Ascending aorta (tissue), 2 donors: ENCODE measurements at regions of chr14 and their contacts with region 1.

Region 1: GRCh38 chr14:35046048-35046741 is at the start of gene FAM177A1:
- DNase-seq: peak; percentile 97 to 100
- H3K4me3 ChIP-seq: peak within 1 kb of the TSS; percentile 81 to 89
- H3K27ac ChIP-seq: peak within 1 kb of the TSS; percentile 99
- H3K4me1 ChIP-seq: peaks cover 0 to 14% of the 10 kb centered on the region in 2 donors
- H3K27me3 ChIP-seq: no peaks in the 10 kb centered on the region
- CTCF ChIP-seq: no peak
- total RNA-seq, gene FAM177A1: 35.1 TPM

Region 2: DNA sequence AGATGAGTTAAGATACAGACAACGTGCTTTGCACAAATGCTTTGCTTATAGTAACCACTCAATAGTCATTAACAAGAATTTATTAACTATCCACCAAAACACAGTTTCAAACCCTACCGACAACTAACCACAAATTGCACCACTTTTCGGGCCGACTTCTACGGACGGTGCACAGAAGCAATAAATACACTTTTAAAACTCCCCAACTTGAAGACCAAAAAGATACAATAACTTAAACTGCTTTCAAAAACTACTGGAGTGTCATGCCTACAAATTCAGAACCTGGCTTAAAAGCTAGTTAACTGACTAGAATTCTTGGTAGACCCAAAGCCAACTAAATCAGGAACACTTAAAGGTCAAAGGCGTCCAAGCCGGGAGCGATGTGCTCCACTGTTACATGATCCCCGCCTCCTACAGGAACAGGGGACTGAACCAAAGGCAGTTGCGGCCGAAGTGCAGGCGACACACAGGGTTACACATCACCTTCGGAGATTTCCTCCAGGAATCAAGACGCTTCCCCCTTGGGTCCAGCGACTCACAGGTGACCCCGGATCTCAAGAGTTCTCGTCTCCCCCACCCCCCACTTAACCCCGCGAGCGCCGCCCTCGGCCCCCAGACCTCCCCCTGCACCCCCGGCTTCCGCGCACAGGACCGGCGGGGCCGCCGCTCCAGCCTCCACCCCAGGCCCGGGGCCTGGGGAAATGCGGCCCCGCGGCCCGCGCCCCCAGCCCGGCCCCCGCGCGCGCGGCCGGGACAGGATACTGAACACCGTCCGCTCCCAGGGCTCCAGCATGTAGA is 584.7 kb before region 1 on chr14:
- intact Hi-C with region 1: loop called (anchors 5 kb)
- DNase-seq: peak in 1 of 2 donors; percentile 77
- H3K4me3 ChIP-seq: peak overlapping the region; percentile 80 to 86
- H3K27ac ChIP-seq: peak overlapping the region; percentile 76 to 94
- H3K4me1 ChIP-seq: peaks cover 0 to 7% of the 10 kb centered on the region in 2 donors
- H3K27me3 ChIP-seq: no peaks in the 10 kb centered on the region
- CTCF ChIP-seq: no peak

Region 3: DNA sequence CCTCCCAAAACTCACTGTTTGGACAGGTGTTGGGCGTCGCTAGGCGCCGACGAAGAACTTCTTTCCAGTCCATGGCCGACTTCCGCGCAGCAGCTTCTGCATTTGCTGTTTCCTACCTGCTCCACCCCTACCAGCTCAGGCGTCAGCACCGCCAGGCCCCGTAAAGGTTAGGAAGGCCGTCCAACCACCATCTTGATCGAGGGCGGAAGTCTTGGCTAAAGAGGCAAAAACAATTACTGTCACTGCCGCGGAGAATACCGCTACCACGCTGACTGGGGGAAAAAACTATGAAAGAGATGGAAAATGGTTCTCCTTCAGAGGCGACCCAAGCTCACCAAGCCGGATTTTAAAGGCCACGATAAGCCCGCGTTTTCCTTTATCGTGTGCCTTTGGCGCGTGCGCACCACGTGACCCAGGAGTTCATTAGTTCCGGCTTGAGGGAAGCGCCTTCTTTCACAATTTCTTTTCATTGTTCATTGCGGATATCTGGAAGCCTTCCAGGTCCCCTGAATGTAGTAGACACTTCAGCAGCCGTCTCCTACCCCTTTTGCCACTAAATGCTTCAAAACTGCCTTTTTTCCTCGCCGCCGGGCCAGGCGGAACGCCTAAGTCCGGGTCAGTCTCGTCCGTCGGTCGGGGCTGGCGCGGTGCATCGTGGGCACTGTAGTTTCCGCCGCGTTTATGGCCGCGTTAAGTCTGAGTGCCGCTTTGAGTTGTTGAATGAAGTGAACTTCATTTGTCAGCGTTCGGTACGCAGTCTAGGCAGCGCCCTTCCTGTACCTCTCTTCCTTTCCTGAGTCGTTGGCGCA is 75.9 kb after region 1 on chr14 and contains the starts of genes PPP2R3C and PRORP:
- intact Hi-C with region 1: loop called (anchors 1 kb)
- DNase-seq: peak; percentile 74 to 94
- H3K4me3 ChIP-seq: peak within 1 kb of the TSS; percentile 83 to 92
- H3K27ac ChIP-seq: peak within 1 kb of the TSS; percentile 91 to 98
- H3K4me1 ChIP-seq: peaks cover 3 to 18% of the 10 kb centered on the region in 2 donors
- H3K27me3 ChIP-seq: no peaks in the 10 kb centered on the region
- CTCF ChIP-seq: no peak
- total RNA-seq, gene PPP2R3C: 63.6 TPM
- total RNA-seq, gene PRORP: 42.5 TPM

Region 4: DNA sequence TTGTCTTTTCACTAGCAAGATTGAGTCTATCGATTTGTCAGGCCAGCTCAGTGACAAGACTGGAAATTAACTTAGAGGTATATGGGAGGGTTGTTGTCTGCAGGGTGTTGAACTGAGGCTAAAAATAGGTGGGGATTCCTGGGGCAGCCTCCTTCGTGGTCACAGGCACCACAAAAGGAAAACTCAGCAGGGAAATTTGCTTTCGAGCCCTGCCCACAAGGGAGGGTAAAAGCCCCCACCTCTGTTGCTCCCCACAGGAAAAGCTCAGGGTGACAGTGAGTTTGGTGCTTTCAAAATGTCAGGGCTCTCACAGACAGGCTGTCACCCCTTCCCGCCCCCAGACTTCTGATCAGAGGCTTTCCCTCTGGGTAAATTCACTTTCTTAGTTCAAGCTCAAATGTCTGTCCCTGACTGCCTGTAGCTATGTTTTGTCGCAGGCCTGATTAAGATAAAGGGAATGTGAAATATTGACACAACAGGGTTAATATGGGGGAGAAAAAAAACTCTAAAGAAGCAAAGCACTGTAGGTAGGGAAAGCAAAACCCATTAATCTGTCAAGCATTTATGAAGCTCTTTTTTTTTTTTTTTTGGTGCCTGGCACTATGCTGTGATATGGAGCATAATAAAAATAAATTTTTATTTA is 370.0 kb after region 1 on chr14:
- intact Hi-C with region 1: loop called (anchors 5 kb)
- DNase-seq: no peak
- H3K4me3 ChIP-seq: no peak overlapping the region
- H3K27ac ChIP-seq: peak overlapping the region; percentile 65 to 75
- H3K4me1 ChIP-seq: peaks cover 0 to 29% of the 10 kb centered on the region in 2 donors
- H3K27me3 ChIP-seq: no peaks in the 10 kb centered on the region
- CTCF ChIP-seq: no peak

Region 5: DNA sequence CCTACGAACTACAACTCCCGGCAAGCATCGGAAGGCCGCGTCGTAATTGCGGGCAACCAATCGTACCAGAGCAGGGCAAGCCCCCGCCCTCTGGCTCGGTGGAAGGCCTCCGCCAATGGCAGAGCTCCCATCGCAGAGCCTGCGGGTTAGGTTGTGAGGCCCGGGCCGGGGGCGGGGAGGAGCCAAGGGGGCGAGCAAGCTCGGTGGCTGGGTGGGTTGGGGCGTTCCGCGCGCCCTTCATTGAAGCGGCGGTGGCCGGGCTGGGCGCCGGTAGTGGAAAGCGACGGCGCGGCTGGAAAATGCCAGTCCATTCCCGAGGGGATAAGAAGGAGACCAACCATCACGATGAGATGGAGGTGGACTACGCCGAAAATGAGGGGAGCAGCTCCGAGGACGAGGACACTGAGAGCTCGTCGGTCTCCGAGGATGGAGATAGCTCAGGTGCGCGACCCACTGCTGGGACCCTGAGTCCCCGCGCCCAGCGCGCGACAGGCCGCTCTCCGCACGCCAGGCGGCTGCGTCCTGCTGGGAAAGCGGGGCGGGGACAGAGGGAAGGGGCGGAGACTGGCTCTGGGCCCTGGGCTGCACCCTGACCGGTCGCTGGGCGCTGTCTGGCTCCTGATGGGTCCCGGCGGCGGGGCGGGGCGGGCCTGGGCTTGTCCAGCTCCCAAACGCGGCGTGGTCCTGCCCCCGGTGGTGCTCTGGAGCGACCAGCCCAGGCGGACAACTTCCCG is 780.2 kb after region 1 on chr14 and contains the start of gene BRMS1L:
- intact Hi-C with region 1: loop called (anchors 10 kb)
- DNase-seq: peak; percentile 96 to 99
- H3K4me3 ChIP-seq: peak within 1 kb of the TSS; percentile 90 to 92
- H3K27ac ChIP-seq: peak within 1 kb of the TSS; percentile 98 to 99
- H3K4me1 ChIP-seq: peaks cover 0 to 4% of the 10 kb centered on the region in 2 donors
- H3K27me3 ChIP-seq: no peaks in the 10 kb centered on the region
- CTCF ChIP-seq: no peak
- total RNA-seq, gene BRMS1L: 7.7 TPM